Mammary epithelial cell (primary cell): ENCODE measurements at regions of chr7 and their contacts with region 1.

Region 1: DNA sequence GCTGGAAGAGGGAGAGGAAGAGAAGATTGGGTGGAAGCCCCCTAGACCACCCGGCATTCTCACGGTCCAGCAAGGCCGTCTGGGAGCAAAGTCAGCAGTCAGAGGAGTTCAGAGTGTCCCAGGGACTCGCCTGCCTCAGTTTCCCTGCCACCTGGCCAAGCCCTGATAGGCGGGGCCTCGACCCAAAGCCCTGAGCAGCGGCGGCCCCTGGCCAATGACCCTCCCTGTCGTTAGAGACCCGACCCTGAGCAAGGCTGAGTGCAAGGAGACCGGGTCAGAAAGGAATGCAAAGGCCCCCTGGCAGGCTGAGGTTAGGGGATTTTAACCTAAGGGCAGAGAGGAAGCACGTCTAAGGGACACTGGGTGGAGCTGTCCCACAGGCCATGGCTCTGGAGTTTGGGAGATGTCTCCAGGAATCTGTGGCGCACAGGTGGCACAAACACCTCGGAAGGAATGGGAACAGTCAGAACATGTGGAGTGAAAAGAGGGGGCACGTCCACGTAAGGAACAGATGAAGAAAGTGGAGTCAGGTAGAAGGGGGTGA is 196.8 kb upstream of the PDE1C start:
- DNase-seq: no peak
- H3K4me3 ChIP-seq: no peak overlapping the region
- H3K27ac ChIP-seq: no peak overlapping the region
- H3K4me1 ChIP-seq: no peaks in the 10 kb centered on the region
- H3K27me3 ChIP-seq: no peaks in the 10 kb centered on the region
- CTCF ChIP-seq: no peak

Region 2: DNA sequence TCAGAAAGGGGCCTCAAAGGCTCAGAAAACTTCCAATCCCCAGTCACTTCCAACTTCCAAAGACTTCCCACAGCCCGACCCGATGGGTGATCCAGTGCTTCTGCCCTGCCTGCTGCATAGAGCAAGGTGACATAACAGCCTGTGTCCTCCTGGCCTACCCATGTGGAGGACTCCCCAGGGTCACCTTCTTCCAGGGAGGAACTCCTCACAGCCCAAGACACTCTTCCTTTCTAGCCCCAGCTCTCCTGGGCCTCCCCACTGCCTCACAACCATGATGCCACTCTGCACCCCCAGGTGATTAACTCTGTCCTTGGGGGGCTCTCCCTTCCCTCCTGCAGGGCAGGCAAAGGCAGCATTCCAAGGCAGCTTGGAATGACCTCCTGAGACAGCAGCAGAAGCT is 38.4 kb before region 1 on chr7:
- CTCF ChIA-PET with region 1: no interaction called
- dilution Hi-C with region 1: loop called (anchors 5 kb)
- in situ Hi-C with region 1: no loop called
- intact Hi-C with region 1: no loop called
- DNase-seq: no peak
- H3K4me3 ChIP-seq: no peak overlapping the region
- H3K27ac ChIP-seq: no peak overlapping the region
- H3K4me1 ChIP-seq: no peaks in the 10 kb centered on the region
- H3K27me3 ChIP-seq: peaks cover 3% of the 10 kb centered on the region
- CTCF ChIP-seq: no peak

Region 3: GRCh38 chr7:32335107-32335506 is 68.1 kb after region 1 on chr7:
- CTCF ChIA-PET with region 1: no interaction called
- dilution Hi-C with region 1: no loop called
- in situ Hi-C with region 1: no loop called
- intact Hi-C with region 1: no loop called
- DNase-seq: peak; percentile 75
- H3K4me3 ChIP-seq: no peak overlapping the region
- H3K27ac ChIP-seq: no peak overlapping the region
- H3K4me1 ChIP-seq: peaks cover 24% of the 10 kb centered on the region
- H3K27me3 ChIP-seq: no peaks in the 10 kb centered on the region
- CTCF ChIP-seq: no peak

Region 4: DNA sequence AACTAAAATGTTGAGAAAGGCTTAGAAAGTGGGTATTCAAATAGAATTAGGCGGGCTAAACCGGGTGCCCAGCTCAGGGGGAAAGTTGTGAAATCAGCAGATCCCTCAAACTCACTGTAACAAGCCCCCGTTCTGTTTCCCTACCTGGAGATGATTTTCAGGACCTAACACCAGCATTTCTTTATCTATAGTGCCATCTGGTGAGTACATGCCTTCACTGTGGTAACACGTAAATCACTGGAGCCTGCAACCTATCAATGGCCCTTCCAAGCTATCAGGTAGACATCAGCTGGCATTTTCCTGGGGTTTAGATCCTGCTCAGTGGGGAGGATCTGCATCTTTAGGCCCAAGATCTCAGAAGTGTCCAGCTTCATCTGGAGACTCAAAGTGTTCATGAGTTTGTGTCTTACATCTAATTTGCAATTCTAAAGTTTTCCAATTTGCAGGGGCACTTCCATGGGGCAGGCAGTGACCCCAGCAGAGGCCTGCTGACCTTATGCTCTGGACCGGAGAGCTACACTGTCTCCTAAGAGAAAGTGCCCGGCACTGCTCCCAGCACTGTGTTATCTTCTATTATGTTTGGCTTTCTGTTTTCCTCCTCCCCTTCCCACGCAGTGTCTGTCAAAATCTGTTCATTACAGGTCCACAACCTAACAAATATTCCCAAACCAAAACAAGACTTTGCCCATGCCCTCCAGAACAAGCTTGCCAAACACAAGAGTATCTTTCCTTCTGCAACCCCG is 90.7 kb after region 1 on chr7:
- CTCF ChIA-PET with region 1: no interaction called
- dilution Hi-C with region 1: loop called (anchors 5 kb)
- in situ Hi-C with region 1: no loop called
- intact Hi-C with region 1: no loop called
- DNase-seq: peak; percentile 22
- H3K4me3 ChIP-seq: no peak overlapping the region
- H3K27ac ChIP-seq: no peak overlapping the region
- H3K4me1 ChIP-seq: no peaks in the 10 kb centered on the region
- H3K27me3 ChIP-seq: peaks cover 3% of the 10 kb centered on the region
- CTCF ChIP-seq: peak; percentile 51 to 66